Posterior vena cava (tissue), 2 donors: ENCODE measurements at regions of chr5 and their contacts with region 1.

Region 1: DNA sequence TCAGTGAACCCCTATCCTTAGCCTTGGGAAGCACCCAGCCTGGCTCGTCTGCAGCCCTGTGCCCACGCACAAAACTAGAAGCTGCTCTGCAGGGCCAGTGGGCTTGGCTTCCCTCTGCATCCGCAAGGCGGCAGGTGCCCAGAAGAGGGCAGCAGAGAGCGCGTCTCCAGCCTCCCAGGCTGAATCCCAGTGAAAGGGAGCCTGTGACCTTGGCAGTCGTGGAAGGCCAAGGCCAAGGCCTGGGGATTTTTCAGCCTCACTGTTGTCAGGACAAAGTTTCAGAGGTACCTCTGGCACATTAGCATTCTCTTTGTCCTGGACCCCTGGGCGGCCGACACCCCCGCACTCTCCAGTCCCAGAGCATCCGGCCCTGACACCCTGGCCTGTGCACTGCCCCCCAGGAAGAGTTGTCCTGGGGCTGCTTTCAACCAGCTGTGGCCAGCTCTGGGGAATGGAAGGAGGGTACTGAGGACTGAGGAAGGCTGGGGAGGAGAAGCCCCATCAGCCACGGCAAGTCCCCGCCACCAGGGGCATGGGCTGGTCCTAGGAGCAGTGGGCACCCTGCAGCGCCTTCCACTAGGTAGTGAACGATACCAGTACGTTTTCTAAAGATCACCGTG is 63.6 kb upstream of the IL17B start:
- DNase-seq: peak; percentile 95

Region 2: DNA sequence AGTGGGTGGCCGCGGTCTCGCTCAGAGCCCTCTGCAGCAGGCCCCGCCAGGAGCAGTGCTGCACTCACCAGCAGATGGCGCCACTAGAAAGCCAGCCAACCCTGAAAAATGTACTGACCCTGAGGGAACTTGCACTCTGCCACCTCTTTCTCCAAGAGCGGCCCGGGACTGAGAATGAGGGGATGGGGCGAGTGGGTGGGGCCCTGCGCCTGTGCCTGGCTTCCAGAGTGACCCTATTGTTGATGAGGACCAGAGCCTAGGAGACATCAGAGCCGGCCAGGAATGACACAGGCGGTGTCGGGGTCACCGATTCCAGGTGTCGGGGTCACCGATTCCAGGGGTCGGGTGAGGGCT is 60.7 kb before region 1 on chr5:
- intact Hi-C with region 1: no loop called
- DNase-seq: peak; percentile 94

Region 3: DNA sequence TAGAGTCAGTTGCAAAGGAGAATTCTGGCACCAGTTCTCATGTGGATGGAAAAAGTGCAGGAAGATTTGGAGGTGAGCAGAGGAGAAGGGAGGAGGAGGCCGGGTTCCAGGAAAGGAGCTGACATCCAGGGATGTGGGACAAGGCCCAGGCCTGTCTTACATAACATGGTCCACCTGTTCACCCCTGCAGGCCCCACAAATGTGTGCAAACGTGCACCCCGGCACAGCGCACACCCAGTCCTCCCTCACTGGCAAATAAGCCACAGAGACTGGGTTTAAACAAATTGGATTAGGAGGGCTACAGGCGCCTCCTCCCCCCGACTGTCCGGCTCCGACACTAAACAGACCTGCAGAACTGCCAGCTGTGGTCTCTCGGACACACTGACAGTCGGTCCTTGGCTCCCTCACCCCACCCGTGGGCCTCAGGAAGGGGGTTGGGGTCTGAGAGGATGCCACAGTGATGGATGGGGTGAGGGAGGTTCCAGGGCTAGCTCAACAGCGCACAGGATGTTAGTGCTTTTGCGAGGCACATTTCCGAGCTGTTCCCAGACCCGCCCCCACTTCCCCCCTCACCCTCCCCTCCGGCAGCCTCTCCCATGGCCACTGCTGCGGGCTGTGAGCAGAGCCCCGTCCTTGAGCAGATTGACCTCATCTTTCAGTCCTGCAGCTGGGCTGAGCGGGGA is 20.2 kb before region 1 on chr5:
- intact Hi-C with region 1: no loop called
- DNase-seq: no peak

Region 4: GRCh38 chr5:149551200-149552037 is 108.7 kb after region 1 on chr5 and contains the start of gene CSNK1A1:
- intact Hi-C with region 1: loop called in 1 of 2 experiments (anchors 5 kb)
- DNase-seq: peak; percentile 100
- total RNA-seq, gene CSNK1A1: 223 to 231 TPM

Region 5: GRCh38 chr5:149561848-149562247 is 119.2 kb after region 1 on chr5:
- intact Hi-C with region 1: loop called in 1 of 2 experiments (anchors 2 kb)
- DNase-seq: no peak